Activated CD8-positive, alpha-beta T cell treated with anti-CD3 and anti-CD28 coated beads, Interleukin-2, amount 10 ng/mL, durations not matched to agents 7 days and 5 days (primary cell): ENCODE measurements at regions of chr1 and their contacts with region 1.

Region 1: DNA sequence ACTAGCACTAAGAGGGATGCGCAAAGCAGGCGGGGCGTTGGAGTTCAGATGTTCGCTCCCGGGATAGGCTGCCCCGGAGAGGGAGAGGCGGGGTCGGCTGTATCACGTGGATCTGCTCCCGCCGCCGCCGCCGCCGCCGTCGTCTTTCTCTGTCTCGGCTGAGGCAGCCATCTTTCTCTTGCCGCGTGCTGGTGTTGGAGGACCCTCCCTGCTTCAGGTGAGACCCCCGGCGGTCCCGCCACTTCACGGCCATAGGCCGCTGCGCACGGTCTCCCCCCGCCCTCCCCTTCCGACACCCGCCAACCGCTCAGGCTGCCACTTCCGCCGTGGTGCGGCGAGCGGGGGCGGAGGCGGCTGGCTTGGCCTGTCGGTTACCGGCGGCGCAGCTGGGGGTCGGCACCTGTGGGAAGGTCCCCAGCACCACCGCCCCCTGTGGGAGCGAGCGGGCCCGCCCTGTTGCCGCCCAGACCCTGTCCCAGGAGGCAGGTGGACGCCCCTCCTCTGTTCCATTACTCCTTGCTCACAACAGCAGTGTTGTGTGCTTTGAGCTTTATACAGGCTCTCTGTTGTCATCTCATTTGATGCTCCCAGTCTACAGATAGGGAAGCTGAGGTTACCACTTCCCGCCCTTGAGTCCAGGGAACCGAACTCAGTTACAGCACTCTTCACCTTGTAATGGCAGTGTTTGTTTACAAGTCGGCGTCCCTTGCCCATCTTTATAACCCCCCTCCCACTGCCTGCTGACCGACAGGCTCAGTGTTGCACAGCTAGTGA is at the start of gene BTF3L4:
- DNase-seq: peak; percentile 97
- ATAC-seq: peak; percentile 93
- H3K4me3 Mint-ChIP-seq: peak within 1 kb of the TSS; percentile 95
- H3K27ac Mint-ChIP-seq: peak within 1 kb of the TSS; percentile 96
- H3K4me1 Mint-ChIP-seq: peaks cover 50% of the 10 kb centered on the region
- H3K27me3 Mint-ChIP-seq: no peaks in the 10 kb centered on the region
- total RNA-seq, gene BTF3L4: 34.5 to 37.1 TPM

Region 2: GRCh38 chr1:51976846-51977535 is 79.4 kb before region 1 on chr1:
- CTCF ChIA-PET with region 1: no interaction called
- POLR2A ChIA-PET with region 1: no interaction called
- DNase-seq: no peak
- ATAC-seq: no peak
- H3K4me3 Mint-ChIP-seq: no peak overlapping the region
- H3K27ac Mint-ChIP-seq: no peak overlapping the region
- H3K4me1 Mint-ChIP-seq: no peaks in the 10 kb centered on the region
- H3K27me3 Mint-ChIP-seq: peaks cover 8% of the 10 kb centered on the region

Region 3: DNA sequence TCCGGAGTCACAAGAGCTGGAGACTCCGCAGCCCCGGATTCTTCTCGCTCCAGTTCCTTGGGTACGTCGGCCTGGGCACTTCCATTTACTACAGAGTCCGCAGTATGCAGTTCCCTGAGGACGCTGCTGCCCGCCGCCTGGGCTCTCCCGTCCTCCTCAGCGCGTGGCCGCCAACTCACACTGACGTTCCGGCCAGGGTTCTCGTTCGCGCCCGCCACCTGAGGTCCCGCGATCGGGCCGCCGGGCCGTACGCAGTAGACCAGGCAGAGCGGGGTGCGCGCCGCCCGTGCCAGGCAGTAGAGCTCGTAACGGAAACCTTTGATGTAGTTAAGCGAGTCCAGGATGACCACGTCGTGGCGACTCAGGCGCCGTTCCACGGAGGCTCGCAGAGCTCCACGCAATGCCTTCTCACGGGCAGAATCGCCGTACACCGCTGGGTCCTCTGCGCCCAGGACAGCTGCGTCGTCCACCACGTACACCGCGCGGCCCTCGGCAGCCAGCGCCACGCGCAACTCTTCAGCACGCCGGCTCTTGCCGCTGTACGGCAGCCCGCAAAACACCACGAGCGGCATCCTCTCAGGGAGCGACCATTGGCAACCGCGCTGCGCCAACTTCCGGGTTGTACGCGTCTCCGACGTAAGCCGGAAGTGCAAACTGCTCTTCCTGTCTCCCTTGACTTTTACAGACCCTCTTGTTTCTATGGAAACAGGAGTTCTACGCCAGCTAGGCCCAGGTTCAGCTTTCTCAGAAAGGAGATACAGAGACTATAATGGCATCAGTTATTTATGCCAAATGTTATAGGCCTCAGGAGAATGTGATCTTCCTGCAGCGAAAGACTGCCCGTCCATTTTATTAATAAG is 22.9 kb before region 1 on chr1 and contains the start of gene KTI12:
- CTCF ChIA-PET with region 1: interaction called, 3 read pairs
- POLR2A ChIA-PET with region 1: interaction called, 19 read pairs
- DNase-seq: peak; percentile 94
- ATAC-seq: peak; percentile 93
- H3K4me3 Mint-ChIP-seq: peak within 1 kb of the TSS; percentile 94
- H3K27ac Mint-ChIP-seq: peak within 1 kb of the TSS; percentile 98
- H3K4me1 Mint-ChIP-seq: peaks cover 32% of the 10 kb centered on the region
- H3K27me3 Mint-ChIP-seq: no peaks in the 10 kb centered on the region
- total RNA-seq, gene KTI12: 14.6 to 15.2 TPM